ENCODE measurements at regions of chr5 and their contacts with region 1.

Region 1: GRCh38 chr5:139439013-139439903 is at the start of gene DNAJC18:
- DNase-seq: peak; percentile 94 to 97 (median 95)
- ATAC-seq: peak; percentile 97
- H3K4me3 ChIP-seq: peak within 1 kb of the TSS; percentile 80
- H3K27ac ChIP-seq: peak within 1 kb of the TSS; percentile 91
- H3K4me1 ChIP-seq: peaks cover 11 to 17% of the 10 kb centered on the region in 2 experiments
- H3K27me3 ChIP-seq: no peaks in the 10 kb centered on the region
- CTCF ChIP-seq: no peak
- EP300 ChIP-seq: no peak
- POLR2A ChIP-seq: peak; percentile 64
- RAD21 ChIP-seq: no peak
- polyA plus RNA-seq, gene DNAJC18: 7.7 to 13.3 TPM

Region 2: DNA sequence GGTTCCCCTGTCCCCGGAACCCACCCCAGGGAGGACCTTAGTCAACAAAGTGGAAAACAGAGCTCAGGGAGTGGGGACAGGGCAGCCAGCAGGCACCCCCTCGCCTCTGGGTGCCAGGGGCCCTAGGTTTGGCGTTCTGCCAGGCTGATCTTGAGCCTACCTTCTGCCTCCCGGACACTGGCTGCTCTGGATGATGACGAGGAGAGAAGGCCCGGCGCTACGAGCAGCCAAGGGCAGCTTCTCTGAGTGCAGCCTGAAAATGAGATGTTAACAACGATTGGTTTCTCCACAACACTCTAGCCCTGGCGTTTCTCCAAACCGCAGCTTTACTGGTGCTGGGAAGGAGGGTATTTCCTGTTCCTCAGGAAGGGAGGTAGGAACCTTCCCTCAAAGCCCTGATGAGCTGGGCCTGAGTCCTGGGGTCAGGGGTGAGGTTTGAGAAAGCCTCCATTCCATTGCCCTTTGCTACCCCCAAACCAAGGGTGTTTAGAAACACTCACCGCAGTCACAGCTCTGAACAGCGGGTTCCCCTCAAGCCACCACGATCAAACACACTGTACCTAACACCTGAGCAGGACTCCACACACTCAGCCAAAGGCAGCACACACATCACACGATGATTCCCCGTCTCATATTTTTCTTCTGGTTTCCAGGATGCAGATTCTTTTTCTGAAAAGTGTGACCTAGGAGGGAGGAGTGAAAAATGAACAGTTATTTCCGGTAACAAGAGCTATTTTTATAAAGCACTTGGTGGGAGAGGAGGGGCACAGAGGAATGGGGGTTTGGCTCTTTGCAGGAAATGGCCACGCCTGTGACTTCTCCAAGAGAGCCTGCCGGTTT is 43.0 kb after region 1 on chr5 and contains the start of gene STING1:
- CTCF ChIA-PET with region 1: no interaction called
- POLR2A ChIA-PET with region 1: interaction called, 3 read pairs
- in situ Hi-C with region 1: no loop called
- intact Hi-C with region 1: loop called (anchors 1 kb)
- DNase-seq: peak; percentile 75 to 96 (median 82)
- ATAC-seq: peak; percentile 79
- H3K4me3 ChIP-seq: peak within 1 kb of the TSS; percentile 58
- H3K27ac ChIP-seq: peak within 1 kb of the TSS; percentile 98
- H3K4me1 ChIP-seq: peaks cover 52 to 53% of the 10 kb centered on the region in 2 experiments
- H3K27me3 ChIP-seq: no peaks in the 10 kb centered on the region
- CTCF ChIP-seq: 0 out of 6 replicates have a peak, but pooled peaks of 1 of the 3 experiments have one; percentile 3
- EP300 ChIP-seq: peak; percentile 46; the same call in 1 of the 2 replicates
- POLR2A ChIP-seq: peak; percentile 76
- RAD21 ChIP-seq: peak in 1 of 2 experiments; percentile 32; a peak in 1 of 4 replicates
- polyA plus RNA-seq, gene STING1: 20.8 to 23.3 TPM

Region 3: GRCh38 chr5:139684881-139685749 is 245.9 kb after region 1 on chr5:
- CTCF ChIA-PET with region 1: no interaction called
- POLR2A ChIA-PET with region 1: no interaction called
- in situ Hi-C with region 1: no loop called
- intact Hi-C with region 1: no loop called
- DNase-seq: no peak
- ATAC-seq: 0 out of 3 replicates have a peak, but pooled peaks have one; percentile 2
- H3K4me3 ChIP-seq: no peak overlapping the region
- H3K27ac ChIP-seq: no peak overlapping the region
- H3K4me1 ChIP-seq: peaks cover 21 to 62% of the 10 kb centered on the region in 2 experiments
- H3K27me3 ChIP-seq: no peaks in the 10 kb centered on the region; a peak in 1 of 5 replicates
- CTCF ChIP-seq: peak in 2 of 3 experiments; percentile 18 to 34; a peak in 3 of 6 replicates
- EP300 ChIP-seq: no peak
- POLR2A ChIP-seq: peak; percentile 9
- RAD21 ChIP-seq: no peak

Region 4: DNA sequence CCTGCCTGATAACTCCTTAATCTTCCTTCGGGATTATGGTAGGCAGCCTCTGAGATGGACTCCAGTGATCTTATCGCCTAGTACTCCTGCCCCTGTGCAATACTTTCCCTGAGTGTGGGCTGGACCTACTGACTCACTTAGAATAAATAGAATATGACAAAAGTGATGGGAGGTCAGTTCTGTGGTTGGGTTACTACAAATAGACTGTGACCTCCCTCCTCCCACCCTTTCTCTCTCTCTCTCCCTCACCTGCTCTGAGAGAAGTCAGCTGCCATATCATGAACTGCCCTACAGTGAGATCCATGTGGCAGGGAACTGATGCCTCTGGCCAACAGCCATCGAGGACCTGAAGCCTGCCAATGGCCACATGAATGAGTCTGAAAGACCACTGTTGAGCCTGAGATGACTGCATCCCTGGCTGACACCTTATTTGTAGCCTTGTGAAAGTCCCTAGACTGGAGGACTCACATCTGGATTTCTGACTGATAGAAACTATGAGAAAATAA is 572.1 kb after region 1 on chr5:
- CTCF ChIA-PET with region 1: no interaction called
- POLR2A ChIA-PET with region 1: no interaction called
- in situ Hi-C with region 1: no loop called
- intact Hi-C with region 1: no loop called
- DNase-seq: peak in 1 of 4 experiments; percentile 14
- ATAC-seq: no peak
- H3K4me3 ChIP-seq: no peak overlapping the region
- H3K27ac ChIP-seq: no peak overlapping the region
- H3K4me1 ChIP-seq: no peaks in the 10 kb centered on the region
- H3K27me3 ChIP-seq: peaks cover 10 to 16% of the 10 kb centered on the region in 2 experiments; a peak in 2 of 5 replicates
- CTCF ChIP-seq: no peak
- EP300 ChIP-seq: no peak
- POLR2A ChIP-seq: no peak
- RAD21 ChIP-seq: no peak